Heart right ventricle (tissue), 16 donors: ENCODE measurements at regions of chr6 and their contacts with region 1.

Region 1: DNA sequence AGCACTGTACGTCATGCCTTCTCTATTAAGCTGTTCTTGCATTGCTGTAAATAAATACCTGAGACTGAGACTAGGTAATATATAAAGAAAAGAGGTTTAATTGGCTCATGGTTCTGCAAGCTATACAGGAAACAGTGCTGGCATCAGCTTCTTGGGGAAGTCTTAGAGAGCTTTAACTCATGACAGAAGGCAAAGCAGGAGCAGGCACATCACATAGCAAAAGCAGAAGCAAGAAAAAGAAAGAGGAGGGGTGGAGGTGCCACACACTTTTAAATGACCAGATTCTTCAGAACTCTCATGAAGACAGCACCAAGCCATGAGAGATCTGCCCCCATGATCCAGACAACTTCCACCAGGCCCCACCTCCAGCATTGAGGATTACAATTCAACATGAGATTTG is 30.1 kb downstream of the CYB5R4 start:
- DNase-seq: no peak
- ATAC-seq: no peak
- H3K4me3 ChIP-seq: no peak overlapping the region
- H3K27ac ChIP-seq: no peak overlapping the region
- H3K4me1 ChIP-seq: peaks cover 0 to 15% (median 0%) of the 10 kb centered on the region in 9 donors
- H3K27me3 ChIP-seq: no peaks in the 10 kb centered on the region
- CTCF ChIP-seq: no peak

Region 2: DNA sequence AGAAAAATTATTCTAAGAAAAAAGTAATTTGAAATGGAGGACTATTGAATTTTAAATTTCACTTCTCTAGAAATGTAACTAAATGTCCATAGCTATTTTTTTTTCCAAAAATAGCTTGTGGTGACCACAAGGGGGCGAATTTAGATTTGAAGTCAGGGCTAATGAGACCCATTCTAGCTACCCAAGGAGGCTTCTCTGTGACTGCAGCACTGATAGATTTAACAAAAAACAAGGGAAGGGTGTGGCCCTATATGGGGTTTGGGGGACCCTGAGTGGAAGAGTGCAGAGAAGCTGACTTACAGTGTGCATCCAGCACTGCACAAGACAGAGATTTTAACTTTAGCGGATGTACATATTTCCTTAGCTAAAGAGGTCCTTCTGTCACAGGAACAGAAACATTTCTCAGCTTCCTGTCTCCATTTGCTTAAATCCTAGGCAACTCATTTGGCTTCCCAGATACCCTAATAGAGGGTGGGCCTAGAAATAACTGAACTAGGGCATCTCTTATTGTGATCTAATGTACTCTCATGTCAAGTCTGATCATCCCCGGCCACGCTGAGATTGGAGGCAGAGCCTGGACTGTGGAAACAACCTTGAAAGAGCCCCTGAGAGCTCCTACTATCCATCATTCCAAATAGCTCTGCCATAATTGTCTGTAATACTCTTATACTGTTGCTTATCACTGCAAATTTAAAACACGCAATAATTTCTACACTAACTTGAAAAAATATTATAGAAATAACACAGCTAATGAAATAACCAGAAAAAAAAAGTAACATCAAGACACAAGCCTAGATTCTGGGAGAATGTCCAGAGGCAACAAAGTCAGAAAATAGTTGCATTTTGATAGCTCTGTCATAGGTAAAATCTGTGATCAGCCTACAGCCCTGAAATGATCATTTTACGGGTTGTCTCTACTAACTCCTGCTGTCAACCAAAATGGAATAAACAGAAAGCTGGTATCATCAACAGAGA is 274.3 kb before region 1 on chr6:
- intact Hi-C with region 1: no loop called
- DNase-seq: no peak
- ATAC-seq: no peak
- H3K4me3 ChIP-seq: no peak overlapping the region
- H3K27ac ChIP-seq: no peak overlapping the region
- H3K4me1 ChIP-seq: no peaks in the 10 kb centered on the region
- H3K27me3 ChIP-seq: no peaks in the 10 kb centered on the region
- CTCF ChIP-seq: peak in 8 of 9 donors; percentile 26 to 63 (median 50)

Region 3: DNA sequence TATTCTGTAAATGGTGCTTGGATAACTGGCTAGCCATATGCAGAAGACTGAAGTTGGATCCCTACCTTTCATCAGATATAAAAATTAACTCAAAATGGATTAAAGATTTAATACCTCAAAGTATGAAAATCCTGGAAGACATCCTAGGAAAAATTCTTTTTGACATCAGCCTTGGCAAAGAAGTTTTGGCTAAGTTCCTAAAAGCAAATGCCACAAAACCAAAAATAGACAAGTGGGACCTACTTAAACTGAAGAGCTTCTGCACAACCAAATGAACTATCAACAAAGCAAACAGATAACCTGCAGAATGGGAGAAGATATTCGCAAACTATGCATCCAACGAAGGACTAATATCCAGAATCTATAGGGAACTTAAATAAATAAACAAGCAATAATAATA is 96.8 kb before region 1 on chr6:
- intact Hi-C with region 1: no loop called
- DNase-seq: no peak
- ATAC-seq: no peak
- H3K4me3 ChIP-seq: no peak overlapping the region
- H3K27ac ChIP-seq: no peak overlapping the region
- H3K4me1 ChIP-seq: no peaks in the 10 kb centered on the region
- H3K27me3 ChIP-seq: no peaks in the 10 kb centered on the region
- CTCF ChIP-seq: no peak

Region 4: DNA sequence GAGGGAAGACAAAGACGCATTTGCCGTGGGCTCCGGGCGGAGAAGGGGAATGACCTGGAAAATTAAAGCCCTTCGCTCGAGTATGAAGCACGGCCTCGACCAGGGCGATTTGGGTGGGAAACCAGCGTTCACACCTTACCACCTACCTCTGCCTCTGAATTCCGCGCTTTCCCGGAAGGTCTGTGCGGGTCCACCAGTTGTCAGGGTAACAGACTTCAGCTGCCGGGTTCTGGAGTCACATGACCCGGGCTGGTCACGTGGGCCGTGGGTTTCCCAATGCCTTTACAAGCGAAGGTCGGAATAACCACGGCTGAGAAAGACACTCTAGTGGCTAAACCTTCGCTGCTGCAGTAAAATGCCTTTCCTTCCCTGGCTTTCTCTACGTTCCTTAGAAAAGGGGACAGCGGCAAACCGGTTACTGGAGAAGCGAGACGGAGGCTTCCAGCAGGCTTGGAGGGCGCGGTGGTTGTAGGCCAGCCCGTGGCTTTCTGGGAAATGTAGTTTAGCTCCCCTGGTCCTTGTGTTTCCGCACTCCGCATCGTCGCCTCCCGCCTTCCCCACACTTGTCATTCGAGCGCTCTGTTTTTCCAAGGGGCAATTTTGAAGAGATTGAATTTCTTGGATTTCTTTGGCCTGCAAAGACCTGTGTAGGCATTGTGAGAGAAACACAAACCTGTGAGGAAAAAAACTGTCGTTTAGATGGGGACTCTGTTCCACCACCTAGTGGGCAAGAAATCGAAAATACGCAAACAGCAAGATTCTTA is 338.0 kb after region 1 on chr6 and contains the start of gene CEP162:
- intact Hi-C with region 1: loop called in 6 of 10 experiments (anchors 2 to 5 kb)
- DNase-seq: peak; percentile 90 to 92
- ATAC-seq: peak; percentile 97 to 99 (median 98)
- H3K4me3 ChIP-seq: peak within 1 kb of the TSS; percentile 66 to 90 (median 82)
- H3K27ac ChIP-seq: peak within 1 kb of the TSS; percentile 78 to 94 (median 86)
- H3K4me1 ChIP-seq: peaks cover 0 to 15% (median 7%) of the 10 kb centered on the region in 9 donors
- H3K27me3 ChIP-seq: peaks cover 0 to 25% (median 9%) of the 10 kb centered on the region in 7 donors
- CTCF ChIP-seq: peak; percentile 29 to 82 (median 68)
- total RNA-seq, gene CEP162: 2.7 to 5.6 (median 3.8) TPM